HCT116 (cell line): ENCODE measurements at regions of chr5 and their contacts with region 1.

Region 1: GRCh38 chr5:151115274-151115905 is 34.6 kb upstream of the TNIP1 start:
- DNase-seq: peak; percentile 32
- ATAC-seq: peak; percentile 93
- H3K4me3 ChIP-seq: no peak overlapping the region
- H3K27ac ChIP-seq: no peak overlapping the region
- H3K4me1 ChIP-seq: no peaks in the 10 kb centered on the region
- H3K27me3 ChIP-seq: no peaks in the 10 kb centered on the region
- CTCF ChIP-seq: peak; percentile 94 to 96 (median 95)
- POLR2A ChIP-seq: no peak
- RAD21 ChIP-seq: peak; percentile 97

Region 2: DNA sequence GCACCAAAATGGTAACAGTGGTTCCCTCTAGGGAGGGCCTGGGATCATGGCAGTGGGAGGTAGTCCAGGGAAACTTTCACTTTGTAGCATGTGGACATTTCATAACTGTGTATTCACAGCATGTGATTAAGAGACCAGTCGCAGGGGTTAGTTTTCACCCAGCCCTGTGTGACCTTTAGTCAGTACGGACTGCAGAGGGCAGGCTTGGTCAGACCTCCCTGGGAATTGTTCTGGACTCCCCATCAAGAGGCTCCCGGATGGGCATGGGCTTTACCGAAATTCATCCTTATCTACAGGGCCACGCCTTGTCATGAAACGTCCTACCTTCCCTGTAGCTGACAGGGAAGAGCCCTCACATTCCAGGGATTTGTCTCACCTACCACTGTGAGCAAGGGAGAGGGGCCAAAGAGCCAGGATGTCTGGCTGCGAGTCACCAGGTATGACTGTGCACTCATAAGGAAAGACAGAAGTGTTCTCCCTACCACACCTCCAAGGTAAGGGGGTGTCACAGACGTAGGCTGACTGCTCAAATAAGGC is 75.1 kb before region 1 on chr5:
- CTCF ChIA-PET with region 1: interaction called, 12 read pairs
- POLR2A ChIA-PET with region 1: no interaction called
- RAD21 ChIA-PET with region 1: no interaction called
- intact Hi-C with region 1: no loop called
- DNase-seq: peak; percentile 43
- ATAC-seq: peak; percentile 85
- H3K4me3 ChIP-seq: peak overlapping the region in 1 of 2 experiments; percentile 6; a peak in 2 of 4 replicates
- H3K27ac ChIP-seq: peak overlapping the region; percentile 31; the same call in 1 of the 2 replicates
- H3K4me1 ChIP-seq: peaks cover 4 to 55% of the 10 kb centered on the region in 2 experiments; a peak in 3 of 4 replicates
- H3K27me3 ChIP-seq: no peaks in the 10 kb centered on the region
- CTCF ChIP-seq: no peak
- POLR2A ChIP-seq: no peak
- RAD21 ChIP-seq: no peak

Region 3: GRCh38 chr5:151164686-151165392 is 49.4 kb after region 1 on chr5:
- CTCF ChIA-PET with region 1: interaction called, 34 read pairs
- POLR2A ChIA-PET with region 1: no interaction called
- RAD21 ChIA-PET with region 1: no interaction called
- intact Hi-C with region 1: no loop called
- DNase-seq: peak; percentile 77
- ATAC-seq: peak; percentile 99
- H3K4me3 ChIP-seq: no peak overlapping the region
- H3K27ac ChIP-seq: no peak overlapping the region
- H3K4me1 ChIP-seq: peaks cover 0 to 8% of the 10 kb centered on the region in 2 experiments; a peak in 2 of 4 replicates
- H3K27me3 ChIP-seq: no peaks in the 10 kb centered on the region
- CTCF ChIP-seq: peak; percentile 91 to 95 (median 91)
- POLR2A ChIP-seq: no peak
- RAD21 ChIP-seq: peak; percentile 98